ENCODE measurements at regions of chr12 and their contacts with region 1.

Region 1: DNA sequence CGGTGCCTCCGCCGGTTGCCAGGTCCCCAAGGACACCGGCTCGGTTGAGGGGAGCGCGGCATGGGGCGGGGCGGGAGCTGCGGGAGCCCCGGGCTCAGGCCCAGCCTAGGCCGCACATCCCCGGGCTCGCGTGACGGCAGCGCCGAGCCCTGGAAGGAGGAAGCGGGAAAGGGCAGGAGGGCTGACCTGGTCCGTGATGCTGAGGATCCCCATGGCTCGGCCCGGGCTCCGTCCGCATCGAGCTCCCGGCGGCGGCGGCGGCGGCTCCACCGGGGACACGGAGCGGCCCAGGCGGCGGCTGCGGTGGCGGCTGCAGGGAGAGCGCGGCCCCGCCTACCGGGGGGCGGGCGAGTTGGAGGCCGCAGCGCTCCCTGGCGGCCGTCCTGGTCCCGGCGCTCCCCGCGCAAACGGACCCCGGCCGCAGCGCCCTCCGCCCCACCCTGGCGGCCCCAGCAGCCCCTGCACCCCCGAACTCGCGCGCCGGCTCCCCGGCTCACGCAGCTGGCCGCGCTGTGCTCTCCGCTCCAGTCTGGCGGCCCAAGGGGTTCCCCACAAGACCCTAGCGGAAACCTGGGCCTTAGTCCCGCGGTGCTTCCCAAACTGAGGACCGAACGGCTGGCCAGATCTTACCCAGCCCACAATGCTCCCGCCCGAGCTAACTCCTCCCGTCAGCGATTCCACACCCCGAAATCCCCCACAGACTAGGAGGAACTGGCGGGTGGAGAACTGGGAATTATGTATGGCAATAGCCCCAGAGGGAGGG is at the start of gene ANKRD52:
- DNase-seq: no peak
- H3K4me3 ChIP-seq: peak within 1 kb of the TSS; percentile 80
- CTCF ChIP-seq: peak; percentile 72

Region 2: DNA sequence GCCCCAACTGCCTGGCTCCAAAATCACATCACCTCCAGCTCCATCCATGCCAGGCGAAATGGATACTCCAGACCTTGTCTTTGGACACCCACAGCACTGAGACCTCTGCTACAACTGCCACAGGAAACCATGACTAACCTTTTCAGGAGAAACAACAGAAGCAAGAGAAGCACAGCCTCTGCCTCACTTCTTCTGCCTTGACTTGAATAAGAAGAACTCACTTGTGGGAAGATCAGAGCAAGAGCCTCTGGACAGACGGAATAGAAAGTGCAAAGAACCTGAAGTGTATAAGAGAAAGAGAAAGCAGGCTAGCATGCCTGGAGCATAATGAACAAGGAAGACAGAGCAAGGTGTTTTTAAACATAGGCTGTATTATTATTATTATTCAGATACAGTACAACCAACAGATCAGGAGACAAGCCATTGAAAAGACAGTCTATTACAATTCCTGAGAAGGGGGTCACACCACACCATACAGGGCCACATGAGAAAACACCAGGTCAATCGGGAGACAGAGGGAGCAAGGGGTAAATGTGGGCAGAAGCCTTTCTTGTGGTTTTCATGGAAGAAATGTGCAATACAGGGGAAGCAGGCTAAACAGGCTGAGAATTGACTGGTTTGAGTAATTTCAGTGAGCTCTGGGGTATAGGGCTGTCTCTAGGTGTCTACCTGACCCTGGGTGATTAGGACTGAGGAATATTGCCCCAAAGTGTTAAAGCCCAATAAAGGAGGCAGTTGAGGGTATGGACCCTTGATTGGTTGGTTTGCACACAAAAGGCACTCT is 629.0 kb before region 1 on chr12:
- CTCF ChIA-PET with region 1: no interaction called
- POLR2A ChIA-PET with region 1: no interaction called
- DNase-seq: no peak
- H3K4me3 ChIP-seq: no peak overlapping the region
- CTCF ChIP-seq: no peak

Region 3: DNA sequence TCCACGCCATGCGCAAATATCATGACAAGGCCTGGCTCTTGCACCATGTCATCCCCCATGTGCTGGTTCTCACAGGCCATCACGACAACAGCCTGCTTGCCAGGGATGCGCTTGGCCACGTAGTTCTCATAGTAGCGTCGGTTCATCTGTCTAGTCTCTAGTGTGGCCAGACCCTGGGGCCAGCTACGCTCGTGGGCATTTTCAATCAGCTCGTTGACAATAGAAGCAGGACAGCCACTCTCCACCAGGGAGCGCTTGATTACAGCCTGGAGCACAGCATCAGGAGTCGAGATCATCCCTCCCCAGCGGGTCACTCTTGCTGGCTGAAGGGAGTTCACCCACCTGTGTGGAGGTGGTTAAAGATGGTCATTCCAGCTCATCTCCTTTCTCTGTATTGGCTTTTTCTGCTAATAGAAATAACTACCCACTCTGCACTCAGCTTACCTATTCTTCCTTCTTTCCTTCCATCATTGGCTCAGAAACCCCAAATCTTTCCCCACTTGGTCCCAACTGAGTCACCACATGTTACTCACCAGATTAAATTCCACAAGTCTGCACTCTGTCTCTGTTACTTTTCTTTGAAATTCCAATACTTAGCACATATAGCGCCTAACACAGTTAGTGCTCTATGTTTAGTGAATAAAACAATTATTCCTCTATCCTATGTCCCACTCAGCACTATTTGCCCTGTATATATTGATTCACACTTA is 51.6 kb before region 1 on chr12:
- CTCF ChIA-PET with region 1: interaction called, 20 read pairs
- POLR2A ChIA-PET with region 1: interaction called, 3 read pairs
- DNase-seq: no peak
- H3K4me3 ChIP-seq: no peak overlapping the region
- CTCF ChIP-seq: peak; percentile 71

Region 4: GRCh38 chr12:56230432-56231183 is 27.6 kb before region 1 on chr12:
- CTCF ChIA-PET with region 1: interaction called, 36 read pairs
- POLR2A ChIA-PET with region 1: interaction called, 5 read pairs
- DNase-seq: no peak
- H3K4me3 ChIP-seq: no peak overlapping the region
- CTCF ChIP-seq: no peak

Region 5: DNA sequence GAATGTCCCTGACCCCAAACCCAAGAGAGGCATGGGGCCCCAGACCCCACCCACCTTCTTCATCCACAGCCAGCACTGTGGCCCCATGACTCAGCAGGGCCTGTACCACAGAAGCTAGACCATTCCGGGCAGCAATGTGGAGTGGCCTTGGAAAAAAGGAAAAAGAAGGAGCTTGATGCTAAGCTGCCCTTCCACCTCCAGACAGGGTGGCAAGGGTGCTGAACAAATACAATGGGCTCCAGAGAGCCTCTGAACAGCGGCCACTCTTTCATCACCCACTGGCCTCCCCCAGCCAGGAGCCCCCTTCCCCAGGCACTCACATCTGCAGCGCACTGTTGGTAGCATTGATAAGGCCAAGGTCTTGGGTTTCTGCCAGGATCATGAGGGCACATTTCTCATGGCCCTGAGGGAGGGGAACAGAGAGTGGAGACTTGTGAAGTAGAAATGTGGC is 14.5 kb before region 1 on chr12:
- CTCF ChIA-PET with region 1: interaction called, 52 read pairs
- POLR2A ChIA-PET with region 1: interaction called, 15 read pairs
- DNase-seq: no peak
- H3K4me3 ChIP-seq: no peak overlapping the region
- CTCF ChIP-seq: no peak

Region 6: DNA sequence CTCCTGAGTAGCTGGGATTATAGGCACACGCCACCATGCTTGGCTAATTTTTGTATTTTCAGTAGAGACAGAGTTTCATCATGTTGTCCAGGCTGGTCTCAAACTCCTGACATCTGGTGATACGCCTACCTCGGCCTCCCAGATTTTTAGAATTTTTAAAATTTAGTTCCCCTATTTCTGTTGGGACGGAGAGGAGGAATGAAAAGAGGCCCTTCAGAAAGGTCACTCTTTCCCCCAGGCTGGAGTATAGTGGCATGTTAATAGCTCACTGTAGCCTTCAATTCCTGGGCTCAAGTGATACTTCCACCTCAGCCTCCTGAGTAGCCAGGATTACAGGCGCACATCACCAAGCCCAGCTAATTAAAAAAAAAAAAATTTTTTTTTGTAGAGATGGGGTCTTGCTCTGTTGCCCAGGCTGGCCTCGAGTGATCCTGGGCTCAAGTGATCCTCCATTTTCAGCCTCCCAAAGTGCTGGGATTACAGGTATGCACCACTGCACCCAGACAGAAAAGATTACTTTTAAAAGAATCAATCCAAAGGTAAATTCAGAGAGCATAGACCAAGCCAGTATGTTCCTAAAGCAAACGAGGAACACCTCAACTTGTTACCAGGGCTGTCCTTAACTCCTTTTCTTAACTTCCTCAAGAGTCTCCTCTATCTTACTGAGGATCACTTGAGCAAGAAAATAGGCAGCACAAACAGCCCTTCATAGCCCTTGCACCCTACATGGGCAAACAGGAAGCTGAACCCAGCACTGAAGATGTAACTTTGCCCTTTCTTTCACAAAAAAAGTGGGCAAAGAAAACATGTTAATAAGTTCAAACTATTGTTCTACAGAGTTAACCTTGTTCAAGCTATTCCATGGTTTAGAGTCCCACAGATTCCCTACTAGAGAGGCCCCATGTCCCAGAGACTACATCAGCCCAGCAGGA is 30.5 kb after region 1 on chr12:
- CTCF ChIA-PET with region 1: interaction called, 10 read pairs
- POLR2A ChIA-PET with region 1: no interaction called
- DNase-seq: no peak
- H3K4me3 ChIP-seq: no peak overlapping the region
- CTCF ChIP-seq: no peak